Posterior vena cava (tissue), 2 donors: ENCODE measurements at regions of chr11 and their contacts with region 1.

Region 1: DNA sequence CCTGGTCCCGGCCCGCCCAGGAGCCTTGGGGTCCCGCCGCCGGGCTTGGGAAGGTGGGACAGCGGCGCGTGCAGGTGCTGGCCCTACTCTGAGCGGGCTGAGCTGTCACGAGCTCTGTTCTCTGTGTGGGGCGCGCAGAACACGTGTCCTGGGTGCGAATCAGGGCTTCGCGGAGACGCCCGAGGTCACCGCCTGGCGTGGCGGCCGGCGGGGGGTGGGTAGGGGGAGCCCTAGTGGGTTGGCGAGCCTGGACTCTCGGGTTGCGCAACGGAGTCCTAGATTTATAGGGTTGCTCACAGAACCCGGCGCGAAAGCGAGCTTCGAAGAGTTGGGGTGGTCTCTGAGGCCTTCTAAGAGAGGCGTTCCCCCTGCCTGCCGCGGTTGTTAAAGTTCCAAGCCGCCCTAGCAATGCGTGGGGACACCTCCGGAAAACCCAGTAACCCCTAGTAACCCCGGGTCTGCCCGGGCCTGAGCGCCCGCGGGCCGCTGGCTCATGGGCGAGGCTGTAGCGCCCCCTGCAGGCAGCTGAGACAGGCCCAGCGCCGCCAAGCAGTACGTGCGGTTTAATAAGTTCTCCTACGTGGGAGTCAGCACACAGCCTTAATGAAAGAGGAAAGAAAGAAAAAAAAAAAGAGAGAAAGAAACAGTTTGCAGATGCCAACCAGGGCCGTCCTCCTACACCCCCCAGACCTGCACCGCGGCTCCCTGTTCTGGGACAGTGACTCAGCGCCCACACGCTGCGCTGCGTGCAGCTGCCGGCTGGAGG is 2.8 kb downstream of the ADM start:
- DNase-seq: peak; percentile 96

Region 2: GRCh38 chr11:9757809-9758636 is 549.6 kb before region 1 on chr11:
- intact Hi-C with region 1: loop called in 1 of 2 experiments (anchors 5 kb)
- DNase-seq: peak; percentile 96

Region 3: GRCh38 chr11:9861860-9862725 is 445.5 kb before region 1 on chr11:
- intact Hi-C with region 1: loop called in 1 of 2 experiments (anchors 10 kb)
- DNase-seq: no peak

Region 4: GRCh38 chr11:9982800-9983579 is 324.6 kb before region 1 on chr11:
- intact Hi-C with region 1: loop called in 1 of 2 experiments (anchors 10 kb)
- DNase-seq: no peak

Region 5: GRCh38 chr11:10108915-10109680 is 198.5 kb before region 1 on chr11:
- intact Hi-C with region 1: loop called in 1 of 2 experiments (anchors 10 kb)
- DNase-seq: no peak

Region 6: GRCh38 chr11:10208131-10208575 is 99.5 kb before region 1 on chr11:
- intact Hi-C with region 1: loop called in 1 of 2 experiments (anchors 5 kb)
- DNase-seq: no peak

Region 7: DNA sequence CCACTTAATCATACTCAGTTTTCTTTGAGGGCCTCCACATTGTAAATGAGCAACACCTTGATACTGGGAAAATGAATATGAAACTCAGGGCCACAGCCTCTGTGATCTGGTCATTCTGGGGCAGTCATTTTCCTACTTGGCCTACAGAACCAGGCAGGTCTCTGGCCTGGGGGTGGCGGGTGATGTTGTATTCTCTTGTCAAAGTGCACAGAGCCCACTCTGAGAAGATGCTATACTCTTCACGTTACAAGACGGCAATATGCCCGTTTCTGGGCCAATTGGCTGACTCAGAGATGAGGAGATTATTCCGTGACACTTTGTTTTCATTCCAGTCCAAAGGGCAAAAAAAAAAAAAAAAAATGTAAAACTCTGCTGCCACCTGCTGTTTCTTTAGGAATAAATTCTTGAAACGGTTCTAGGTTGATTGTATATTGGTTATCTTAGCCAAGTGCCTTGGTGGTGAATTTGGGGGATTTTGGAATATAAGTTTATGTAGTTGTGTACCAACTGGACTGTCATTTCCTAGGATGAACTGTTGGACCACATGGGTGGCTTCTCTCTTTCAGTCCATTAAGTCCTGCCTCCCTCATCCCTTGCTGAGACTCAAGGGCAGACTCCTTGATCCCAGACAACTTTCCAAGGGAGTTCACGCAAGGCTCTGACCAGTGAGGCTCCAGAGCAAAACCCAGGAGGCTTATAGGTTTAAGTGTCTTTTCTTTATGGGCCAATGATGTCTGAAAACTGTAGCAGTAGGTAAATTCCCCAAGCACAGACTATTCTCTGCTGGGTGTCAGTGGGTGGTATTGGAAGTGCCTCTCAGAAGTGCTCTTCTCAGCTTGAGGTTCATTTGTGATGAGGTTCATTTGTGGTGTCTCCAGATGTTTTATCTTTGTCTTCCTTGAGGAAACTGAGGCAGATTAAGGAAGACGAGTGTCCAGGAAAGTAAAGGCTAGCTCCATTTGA is 15.5 kb after region 1 on chr11:
- intact Hi-C with region 1: loop called in 1 of 2 experiments (anchors 2 kb)
- DNase-seq: no peak